ENCODE measurements at regions of chr1 and their contacts with region 1.

Region 1: GRCh38 chr1:6554031-6554906 is at the start of gene NOL9:
- DNase-seq: peak; percentile 92
- H3K4me3 Mint-ChIP-seq: peak within 1 kb of the TSS; percentile 82
- H3K27ac Mint-ChIP-seq: peak within 1 kb of the TSS; percentile 61
- H3K4me1 Mint-ChIP-seq: peaks cover 10% of the 10 kb centered on the region
- H3K27me3 Mint-ChIP-seq: no peaks in the 10 kb centered on the region
- total RNA-seq, gene NOL9: 43.4 and 50.0 TPM in 2 replicates

Region 2: DNA sequence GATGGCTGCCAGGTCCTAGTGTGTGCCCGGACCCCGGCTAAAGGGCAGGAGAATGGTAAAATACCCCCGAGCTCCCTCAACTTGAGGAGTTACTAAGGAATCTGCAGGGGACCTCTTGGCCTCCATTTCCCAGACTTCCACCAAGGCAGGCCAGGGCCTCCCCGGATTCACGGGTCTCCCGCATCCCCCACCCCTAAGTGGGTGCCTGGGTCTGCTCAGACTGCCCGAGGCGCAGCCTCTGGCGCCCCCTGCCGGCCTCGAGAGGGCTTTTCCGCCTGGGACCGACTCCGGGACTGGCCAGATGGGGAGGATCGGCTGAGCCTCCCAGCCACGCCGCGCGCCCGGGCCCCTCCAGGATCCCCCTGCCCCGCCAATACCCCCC is 64.5 kb before region 1 on chr1:
- intact Hi-C with region 1: loop called (anchors 5 kb)
- DNase-seq: peak; percentile 71
- H3K4me3 Mint-ChIP-seq: peak overlapping the region; percentile 79
- H3K27ac Mint-ChIP-seq: peak overlapping the region; percentile 61
- H3K4me1 Mint-ChIP-seq: peaks cover 10% of the 10 kb centered on the region
- H3K27me3 Mint-ChIP-seq: peaks cover 12% of the 10 kb centered on the region

Region 3: GRCh38 chr1:6579374-6580118 is 25.3 kb after region 1 on chr1 and contains the start of gene ZBTB48:
- intact Hi-C with region 1: loop called (anchors 2 kb)
- DNase-seq: peak; percentile 95
- H3K4me3 Mint-ChIP-seq: peak within 1 kb of the TSS; percentile 88
- H3K27ac Mint-ChIP-seq: peak within 1 kb of the TSS; percentile 92
- H3K4me1 Mint-ChIP-seq: peaks cover 31% of the 10 kb centered on the region
- H3K27me3 Mint-ChIP-seq: no peaks in the 10 kb centered on the region
- total RNA-seq, gene ZBTB48: 26.3 and 28.0 TPM in 2 replicates

Region 4: GRCh38 chr1:6602669-6603237 is 48.5 kb after region 1 on chr1 and contains the start of gene KLHL21:
- intact Hi-C with region 1: loop called (anchors 2 kb)
- DNase-seq: peak; percentile 77
- H3K4me3 Mint-ChIP-seq: peak within 1 kb of the TSS; percentile 96
- H3K27ac Mint-ChIP-seq: peak within 1 kb of the TSS; percentile 97
- H3K4me1 Mint-ChIP-seq: peaks cover 21% of the 10 kb centered on the region
- H3K27me3 Mint-ChIP-seq: no peaks in the 10 kb centered on the region
- total RNA-seq, gene KLHL21: 21.3 and 22.6 TPM in 2 replicates

Region 5: DNA sequence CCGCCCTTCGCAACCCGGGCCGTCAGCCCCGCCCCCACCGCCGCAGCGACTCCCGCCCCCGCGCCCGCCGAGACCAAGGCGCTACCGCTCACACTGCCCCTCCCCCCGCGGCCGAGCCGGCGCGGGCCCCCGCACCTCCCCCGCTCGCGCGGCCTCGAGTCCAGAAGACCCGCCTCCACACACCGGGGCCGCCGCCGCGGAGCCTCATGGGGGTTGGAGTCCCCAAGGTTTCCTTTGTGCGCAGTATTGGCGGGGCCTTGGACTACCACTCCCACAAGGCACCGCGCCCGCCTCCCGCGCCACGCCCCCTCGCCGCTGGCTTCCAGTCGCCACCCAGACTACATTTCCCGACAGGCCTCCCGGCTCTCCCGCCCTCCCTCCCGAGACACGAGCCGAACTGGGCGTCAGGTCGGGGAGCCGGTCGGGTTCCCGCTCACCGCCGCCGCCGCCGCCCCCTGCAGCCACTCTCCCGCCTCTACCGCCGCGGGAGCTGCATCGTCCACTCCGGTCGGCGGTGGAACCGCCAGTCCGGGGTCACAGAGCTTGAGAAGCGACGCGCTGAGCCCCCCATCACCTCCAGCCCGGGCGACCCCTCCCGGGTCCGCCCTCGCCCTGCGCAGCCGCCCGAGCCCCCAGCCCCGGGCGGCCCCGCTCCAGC is 59.2 kb after region 1 on chr1 and contains the start of gene PHF13:
- intact Hi-C with region 1: loop called (anchors 2 kb)
- DNase-seq: peak; percentile 99
- H3K4me3 Mint-ChIP-seq: peak within 1 kb of the TSS; percentile 86
- H3K27ac Mint-ChIP-seq: peak within 1 kb of the TSS; percentile 67
- H3K4me1 Mint-ChIP-seq: peaks cover 14% of the 10 kb centered on the region
- H3K27me3 Mint-ChIP-seq: peaks cover 5% of the 10 kb centered on the region
- total RNA-seq, gene PHF13: 19.7 and 20.4 TPM in 2 replicates

Measured in activated T-helper 2 cell treated with anti-CD3 and anti-CD28 coated beads, Interferon-gamma antibody, Interleukin-2, Interleukin-4, amounts not matched to agents 10 μg/mL and 5 μg/mL and 100 μg/mL, durations not matched to agents 14 hours and 24 hours and 36 hours (primary cell).